Activated T-helper 1 cell treated with anti-CD3 and anti-CD28 coated beads, Interleukin-12 subunit alpha, Interleukin-12 subunit beta, Interleukin-2, Interleukin-4 antibody, amounts not matched to agents 30 ng/mL and 10 ng/mL and 1 ng/mL, durations not matched to agents 14 hours and 24 hours and 36 hours (primary cell): ENCODE measurements at regions of chr2 and their contacts with region 1.

Region 1: DNA sequence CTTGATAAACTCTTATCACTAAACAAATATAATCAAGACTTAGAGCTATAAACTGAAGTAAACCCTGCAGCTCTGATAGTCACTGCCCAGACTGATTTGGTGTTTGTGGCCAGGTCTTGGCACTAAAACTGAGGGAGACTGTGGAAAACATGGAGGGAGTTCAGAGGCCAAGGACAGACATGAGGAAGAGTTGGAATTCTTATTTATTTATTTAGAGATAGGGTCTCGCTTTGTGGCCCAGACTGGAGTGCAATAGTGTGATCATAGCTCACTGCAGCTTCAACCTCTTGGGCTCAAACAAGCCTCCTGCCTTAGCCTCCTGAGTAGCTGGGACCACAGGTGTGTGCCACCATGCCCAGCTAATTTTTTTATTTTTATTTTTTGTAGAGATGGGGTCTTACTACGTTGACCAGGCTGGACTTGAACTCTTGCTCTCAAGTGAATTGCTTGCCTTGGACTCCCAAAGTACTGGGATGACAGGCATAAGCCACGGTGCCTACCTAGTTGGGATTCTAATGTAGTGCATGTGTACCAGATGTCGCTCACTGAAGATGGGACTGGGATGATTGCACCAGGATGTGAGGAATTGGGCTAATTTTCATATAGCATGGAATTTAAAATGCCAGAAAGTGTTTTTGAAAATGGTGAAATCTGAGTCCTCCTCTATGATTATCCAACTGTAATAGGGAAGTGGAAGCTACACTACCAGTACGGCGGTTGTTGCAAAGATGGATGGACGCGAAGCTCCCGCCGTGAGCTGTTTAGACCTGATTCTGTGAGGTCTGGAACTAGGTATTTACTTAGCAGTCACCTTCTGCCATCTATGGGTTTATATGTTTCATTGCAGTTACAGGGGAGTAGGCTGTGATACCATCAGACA is 52.7 kb upstream of the CTLA4 start:
- DNase-seq: no peak
- H3K4me3 Mint-ChIP-seq: peak overlapping the region; percentile 24
- H3K27ac Mint-ChIP-seq: peak overlapping the region; percentile 37
- H3K4me1 Mint-ChIP-seq: peaks cover 62% of the 10 kb centered on the region
- H3K27me3 Mint-ChIP-seq: peaks cover 6% of the 10 kb centered on the region

Region 2: DNA sequence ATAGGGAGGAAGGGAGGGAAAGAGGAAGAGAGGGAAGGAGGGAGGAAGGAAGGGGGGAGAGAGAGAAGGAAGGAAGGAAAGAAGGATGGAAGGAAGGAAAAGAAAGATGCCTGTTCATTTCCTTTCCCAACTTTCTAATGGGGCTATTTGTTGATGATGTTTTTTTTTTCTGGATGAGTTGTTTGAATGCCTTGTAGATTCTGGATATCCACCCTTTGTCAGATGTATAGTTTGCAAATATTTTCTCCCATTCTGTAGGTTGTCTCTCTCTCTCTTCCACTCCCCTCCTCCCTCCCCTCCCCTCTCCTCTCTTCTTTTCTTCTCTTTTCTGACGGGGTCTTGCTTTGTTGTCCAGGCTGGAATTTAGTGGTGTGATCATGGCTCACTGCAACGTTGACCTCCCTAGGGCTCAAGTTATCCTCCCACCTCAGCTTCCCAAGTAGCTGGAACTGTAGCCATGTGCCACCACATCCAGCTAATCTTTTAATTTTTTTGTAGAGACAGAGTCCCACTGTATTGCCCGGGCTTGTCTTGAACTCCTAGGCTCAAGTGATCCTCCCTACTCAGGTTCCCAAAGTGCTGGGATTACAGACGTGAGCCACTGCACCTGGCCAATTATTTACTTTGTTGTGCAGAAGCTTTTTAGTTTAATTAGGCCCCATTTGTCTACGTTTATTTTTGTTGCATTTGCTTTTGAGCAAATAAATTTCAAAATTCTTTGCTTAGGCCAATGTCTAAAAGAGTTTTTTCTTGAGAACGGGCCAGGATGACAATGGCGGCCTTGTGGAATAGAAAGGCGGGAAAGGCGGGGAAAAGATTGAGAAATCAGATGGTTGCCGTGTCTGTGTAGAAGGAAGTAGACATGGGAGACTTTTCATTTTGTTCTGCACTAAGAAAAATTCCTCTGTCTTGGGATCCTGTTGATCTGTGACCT is 1237.4 kb before region 1 on chr2:
- intact Hi-C with region 1: loop called (anchors 2 kb)
- DNase-seq: no peak
- H3K4me3 Mint-ChIP-seq: no peak overlapping the region
- H3K27ac Mint-ChIP-seq: no peak overlapping the region
- H3K4me1 Mint-ChIP-seq: peaks cover under 1% of the 10 kb centered on the region
- H3K27me3 Mint-ChIP-seq: no peaks in the 10 kb centered on the region

Region 3: GRCh38 chr2:203225423-203226039 is 589.4 kb before region 1 on chr2:
- intact Hi-C with region 1: loop called (anchors 1 kb)
- DNase-seq: no peak
- H3K4me3 Mint-ChIP-seq: no peak overlapping the region
- H3K27ac Mint-ChIP-seq: no peak overlapping the region
- H3K4me1 Mint-ChIP-seq: no peaks in the 10 kb centered on the region
- H3K27me3 Mint-ChIP-seq: peaks cover 2% of the 10 kb centered on the region

Region 4: GRCh38 chr2:203535078-203535783 is 279.7 kb before region 1 on chr2 and contains the start of gene RAPH1:
- intact Hi-C with region 1: loop called (anchors 1 kb)
- DNase-seq: peak; percentile 44
- H3K4me3 Mint-ChIP-seq: peak within 1 kb of the TSS; percentile 89
- H3K27ac Mint-ChIP-seq: peak within 1 kb of the TSS; percentile 90
- H3K4me1 Mint-ChIP-seq: peaks cover 30% of the 10 kb centered on the region
- H3K27me3 Mint-ChIP-seq: peaks cover 52% of the 10 kb centered on the region
- total RNA-seq, gene RAPH1: 4.2 and 4.6 TPM in 2 replicates

Region 5: DNA sequence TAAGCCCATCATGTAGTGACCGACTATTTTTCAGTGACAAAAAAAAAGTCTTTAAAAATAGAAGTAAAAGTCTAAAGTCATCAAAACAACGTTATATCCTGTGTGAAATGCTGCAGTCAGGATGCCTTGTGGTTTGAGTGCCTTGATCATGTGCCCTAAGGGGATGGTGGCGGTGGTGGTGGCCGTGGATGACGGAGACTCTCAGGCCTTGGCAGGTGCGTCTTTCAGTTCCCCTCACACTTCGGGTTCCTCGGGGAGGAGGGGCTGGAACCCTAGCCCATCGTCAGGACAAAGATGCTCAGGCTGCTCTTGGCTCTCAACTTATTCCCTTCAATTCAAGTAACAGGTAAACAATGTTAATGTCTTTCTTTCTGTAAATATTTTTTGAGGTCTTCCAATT is 108.5 kb before region 1 on chr2 and contains the start of gene CD28:
- intact Hi-C with region 1: loop called (anchors 1 kb)
- DNase-seq: peak; percentile 88
- H3K4me3 Mint-ChIP-seq: peak within 1 kb of the TSS; percentile 85
- H3K27ac Mint-ChIP-seq: peak within 1 kb of the TSS; percentile 100
- H3K4me1 Mint-ChIP-seq: peaks cover 53% of the 10 kb centered on the region
- H3K27me3 Mint-ChIP-seq: no peaks in the 10 kb centered on the region
- total RNA-seq, gene CD28: 132 and 133 TPM in 2 replicates

Region 6: DNA sequence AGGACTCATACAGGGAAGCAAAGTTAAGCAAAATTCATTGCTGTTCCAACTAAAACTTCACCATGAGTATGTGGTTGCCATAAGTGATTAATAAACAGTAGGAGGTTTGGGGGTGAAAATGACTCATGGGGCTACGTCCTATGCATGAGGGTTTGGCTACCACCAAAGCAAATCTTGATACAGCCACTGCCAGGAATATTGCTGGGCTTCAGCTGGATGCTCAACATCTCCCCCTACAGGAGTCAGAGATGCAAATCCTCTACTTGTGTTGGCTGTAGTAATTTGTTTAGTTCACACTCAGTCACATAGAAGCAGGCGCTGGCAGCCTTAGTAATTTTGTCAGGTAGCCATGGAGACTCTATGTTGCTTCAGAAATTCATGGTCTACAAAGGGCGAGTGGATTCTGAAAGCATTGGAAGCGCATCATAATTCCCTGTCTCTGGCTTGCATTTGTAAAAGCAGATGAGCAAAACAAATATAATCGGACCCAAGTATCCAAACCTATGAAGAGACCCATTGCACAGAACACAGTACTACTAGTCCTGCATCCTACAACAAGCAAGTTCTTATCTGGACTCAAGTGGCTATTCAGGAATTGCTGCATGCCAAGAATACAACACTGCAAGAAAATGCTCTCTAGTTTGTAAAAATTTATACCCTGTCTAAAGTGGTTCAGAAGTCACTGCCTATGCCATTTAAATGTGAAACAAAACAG is 32.5 kb before region 1 on chr2:
- intact Hi-C with region 1: loop called (anchors 1 kb)
- DNase-seq: peak; percentile 50
- H3K4me3 Mint-ChIP-seq: no peak overlapping the region
- H3K27ac Mint-ChIP-seq: peak overlapping the region; percentile 92
- H3K4me1 Mint-ChIP-seq: peaks cover 63% of the 10 kb centered on the region
- H3K27me3 Mint-ChIP-seq: no peaks in the 10 kb centered on the region

Region 7: GRCh38 chr2:203909261-203909967 is 94.5 kb after region 1 on chr2:
- intact Hi-C with region 1: loop called (anchors 1 kb)
- DNase-seq: no peak
- H3K4me3 Mint-ChIP-seq: peak overlapping the region; percentile 41
- H3K27ac Mint-ChIP-seq: peak overlapping the region; percentile 62
- H3K4me1 Mint-ChIP-seq: peaks cover 25% of the 10 kb centered on the region
- H3K27me3 Mint-ChIP-seq: peaks cover 2% of the 10 kb centered on the region

Region 8: GRCh38 chr2:204177977-204178540 is 363.2 kb after region 1 on chr2:
- intact Hi-C with region 1: no loop called
- DNase-seq: peak; percentile 51
- H3K4me3 Mint-ChIP-seq: no peak overlapping the region
- H3K27ac Mint-ChIP-seq: no peak overlapping the region
- H3K4me1 Mint-ChIP-seq: no peaks in the 10 kb centered on the region
- H3K27me3 Mint-ChIP-seq: peaks cover 17% of the 10 kb centered on the region